ENCODE measurements at regions of chr6 and their contacts with region 1.

Region 1: GRCh38 chr6:57021086-57021720 is 25.3 kb upstream of the KIAA1586 start:
- DNase-seq: no peak
- ATAC-seq: peak in 1 of 2 donors; percentile 60
- H3K4me3 ChIP-seq: no peak overlapping the region
- H3K27ac ChIP-seq: no peak overlapping the region
- H3K4me1 ChIP-seq: no peaks in the 10 kb centered on the region
- H3K27me3 ChIP-seq: no peaks in the 10 kb centered on the region
- CTCF ChIP-seq: peak; percentile 27 to 57 (median 46)
- POLR2A ChIP-seq: no peak

Region 2: DNA sequence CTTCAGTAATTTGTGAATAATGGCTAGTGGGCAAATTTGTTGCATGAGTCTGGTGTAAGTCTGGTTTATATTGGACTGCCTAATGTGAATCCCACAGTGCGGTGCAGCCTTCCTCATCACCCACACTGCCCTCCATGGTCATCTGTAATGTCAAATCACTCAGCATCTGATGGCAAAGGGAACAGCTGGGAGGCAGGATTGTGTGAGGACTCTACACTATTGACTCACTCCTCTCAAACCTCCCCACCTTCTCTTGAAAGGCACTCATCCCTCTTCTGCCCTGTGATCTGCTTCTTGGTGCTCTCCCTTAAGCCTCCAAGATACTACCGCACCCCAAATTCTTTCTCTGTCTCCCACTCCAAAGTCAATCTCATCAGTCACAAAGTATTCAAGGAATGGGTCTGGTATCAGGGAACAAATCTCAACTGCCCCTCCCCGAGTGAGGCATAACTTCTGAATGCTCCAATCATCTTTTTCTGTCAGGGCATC is 212.3 kb before region 1 on chr6:
- in situ Hi-C with region 1: no loop called
- intact Hi-C with region 1: no loop called
- DNase-seq: peak in 1 of 2 donors; percentile 54
- ATAC-seq: peak; percentile 55 to 79
- H3K4me3 ChIP-seq: no peak overlapping the region
- H3K27ac ChIP-seq: peak overlapping the region; percentile 87 to 93 (median 87)
- H3K4me1 ChIP-seq: peaks cover 70 to 74% of the 10 kb centered on the region in 2 donors
- H3K27me3 ChIP-seq: no peaks in the 10 kb centered on the region
- CTCF ChIP-seq: no peak
- POLR2A ChIP-seq: no peak

Region 3: DNA sequence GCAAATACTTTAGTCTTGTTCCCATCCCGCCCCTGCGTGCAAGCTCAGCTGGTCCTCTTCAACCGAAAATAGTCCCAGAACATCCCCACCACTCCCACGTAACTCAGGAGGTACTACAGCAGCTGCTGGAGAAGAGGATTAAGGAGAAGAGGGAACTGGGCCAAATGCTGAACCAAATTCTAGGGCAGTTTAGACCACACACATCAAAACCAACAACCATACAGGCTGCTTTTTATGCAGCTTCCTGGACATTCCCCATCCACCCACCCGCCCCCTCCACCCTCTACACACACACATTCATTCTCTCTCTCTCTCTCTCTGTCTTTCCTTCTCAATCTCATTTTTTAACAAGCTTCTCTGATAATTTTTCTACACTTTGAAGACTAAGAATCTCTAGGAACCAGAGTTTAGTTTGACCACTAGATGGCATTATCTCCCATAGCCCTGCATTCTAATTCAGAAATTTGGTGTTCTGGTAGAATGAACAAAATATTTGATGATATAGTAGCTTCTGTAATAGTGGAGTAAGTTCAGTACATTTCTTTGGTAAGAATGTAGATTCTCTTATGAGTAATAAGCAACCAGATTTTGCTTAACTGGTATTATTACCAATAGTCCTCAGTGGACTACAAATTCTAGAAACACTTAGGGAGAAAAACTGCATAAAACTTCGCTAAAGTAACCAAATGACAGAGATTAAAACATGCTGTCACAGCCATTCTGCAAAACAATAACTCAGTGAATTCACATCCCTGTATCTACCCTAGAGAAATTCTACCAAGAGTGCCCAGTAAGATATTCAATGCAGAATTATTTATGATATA is 118.3 kb before region 1 on chr6:
- in situ Hi-C with region 1: loop called in 1 of 4 experiments (anchors 25 kb)
- intact Hi-C with region 1: loop called (anchors 2 kb)
- DNase-seq: no peak
- ATAC-seq: no peak
- H3K4me3 ChIP-seq: no peak overlapping the region
- H3K27ac ChIP-seq: no peak overlapping the region
- H3K4me1 ChIP-seq: peaks cover 0 to 8% of the 10 kb centered on the region in 2 donors
- H3K27me3 ChIP-seq: no peaks in the 10 kb centered on the region
- CTCF ChIP-seq: peak in 4 of 5 experiments; percentile 29 to 76 (median 59)
- POLR2A ChIP-seq: no peak

Region 4: GRCh38 chr6:56955171-56956045 is 65.8 kb before region 1 on chr6:
- in situ Hi-C with region 1: no loop called
- intact Hi-C with region 1: loop called (anchors 1 kb)
- DNase-seq: peak; percentile 40 to 71
- ATAC-seq: peak; percentile 87 to 89
- H3K4me3 ChIP-seq: peak overlapping the region; percentile 41 to 80 (median 58)
- H3K27ac ChIP-seq: peak overlapping the region in 1 of 4 donors; percentile 28
- H3K4me1 ChIP-seq: peaks cover 8 to 15% of the 10 kb centered on the region in 2 donors
- H3K27me3 ChIP-seq: no peaks in the 10 kb centered on the region
- CTCF ChIP-seq: peak; percentile 39 to 75 (median 64)
- POLR2A ChIP-seq: no peak

Region 5: GRCh38 chr6:57135885-57136284 is 114.7 kb after region 1 on chr6:
- in situ Hi-C with region 1: no loop called
- intact Hi-C with region 1: no loop called
- DNase-seq: no peak
- ATAC-seq: no peak
- H3K4me3 ChIP-seq: no peak overlapping the region
- H3K27ac ChIP-seq: no peak overlapping the region
- H3K4me1 ChIP-seq: peaks cover 4 to 6% of the 10 kb centered on the region in 2 donors
- H3K27me3 ChIP-seq: no peaks in the 10 kb centered on the region
- CTCF ChIP-seq: no peak
- POLR2A ChIP-seq: no peak

Measured in gastrocnemius medialis (tissue), 4 donors.